ENCODE measurements at regions of chr11 and their contacts with region 1.

Region 1: DNA sequence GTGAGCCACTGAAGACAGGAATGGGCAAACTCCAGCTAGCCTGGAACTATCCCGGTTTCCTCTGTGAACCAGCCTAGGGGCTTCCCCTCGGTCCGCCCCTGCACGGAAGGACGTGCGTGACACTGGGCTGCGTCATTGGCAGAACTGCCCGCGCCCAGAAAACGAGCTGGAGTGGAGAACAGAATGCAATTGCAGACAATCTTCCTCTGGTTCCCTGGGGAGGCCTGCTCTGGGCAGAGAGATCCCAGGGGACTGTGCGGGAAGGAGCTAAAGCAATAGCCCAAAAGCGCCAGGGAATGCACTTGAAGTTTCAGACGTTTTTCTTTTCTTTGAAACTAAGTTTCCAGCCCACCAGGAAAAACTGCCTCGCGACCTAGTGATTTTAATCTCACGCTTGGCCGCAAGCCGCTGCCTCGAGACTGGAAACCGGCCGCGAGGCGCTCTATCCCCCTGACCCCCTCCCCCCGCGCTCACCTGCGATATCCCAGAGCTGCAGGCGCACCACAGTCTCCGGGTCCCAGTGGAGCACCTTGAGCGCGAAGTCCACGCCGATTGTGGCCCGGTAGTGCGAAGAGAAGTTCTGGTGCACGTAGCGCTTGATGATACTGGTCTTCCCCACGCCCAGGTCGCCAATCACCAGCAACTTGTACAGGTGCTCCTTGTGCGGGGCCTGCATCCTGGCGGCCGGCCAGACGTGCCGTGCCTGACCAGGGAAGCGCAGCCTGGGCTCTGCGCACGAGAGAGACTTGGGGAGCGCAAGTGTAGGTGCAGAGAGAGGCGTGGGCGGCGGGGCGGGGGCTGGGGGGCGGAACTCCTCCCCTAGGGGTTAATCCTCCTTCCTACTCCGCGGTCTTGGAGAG is at the start of gene RAB38:
- DNase-seq: peak; percentile 84
- H3K4me3 Mint-ChIP-seq: peak within 1 kb of the TSS; percentile 86
- H3K27ac Mint-ChIP-seq: peak within 1 kb of the TSS; percentile 84
- H3K4me1 Mint-ChIP-seq: peaks cover 43% of the 10 kb centered on the region
- H3K27me3 Mint-ChIP-seq: peaks cover 1% of the 10 kb centered on the region
- total RNA-seq, gene RAB38: 2.0 and 2.2 TPM in 2 replicates

Region 2: GRCh38 chr11:88103337-88104206 is 71.4 kb before region 1 on chr11:
- intact Hi-C with region 1: loop called (anchors 5 kb)
- DNase-seq: peak; percentile 80
- H3K4me3 Mint-ChIP-seq: no peak overlapping the region
- H3K27ac Mint-ChIP-seq: no peak overlapping the region
- H3K4me1 Mint-ChIP-seq: no peaks in the 10 kb centered on the region
- H3K27me3 Mint-ChIP-seq: peaks cover 20% of the 10 kb centered on the region

Region 3: GRCh38 chr11:88194990-88195389 is 20.1 kb after region 1 on chr11:
- intact Hi-C with region 1: no loop called
- DNase-seq: no peak
- H3K4me3 Mint-ChIP-seq: no peak overlapping the region
- H3K27ac Mint-ChIP-seq: no peak overlapping the region
- H3K4me1 Mint-ChIP-seq: no peaks in the 10 kb centered on the region
- H3K27me3 Mint-ChIP-seq: peaks cover 30% of the 10 kb centered on the region

Region 4: DNA sequence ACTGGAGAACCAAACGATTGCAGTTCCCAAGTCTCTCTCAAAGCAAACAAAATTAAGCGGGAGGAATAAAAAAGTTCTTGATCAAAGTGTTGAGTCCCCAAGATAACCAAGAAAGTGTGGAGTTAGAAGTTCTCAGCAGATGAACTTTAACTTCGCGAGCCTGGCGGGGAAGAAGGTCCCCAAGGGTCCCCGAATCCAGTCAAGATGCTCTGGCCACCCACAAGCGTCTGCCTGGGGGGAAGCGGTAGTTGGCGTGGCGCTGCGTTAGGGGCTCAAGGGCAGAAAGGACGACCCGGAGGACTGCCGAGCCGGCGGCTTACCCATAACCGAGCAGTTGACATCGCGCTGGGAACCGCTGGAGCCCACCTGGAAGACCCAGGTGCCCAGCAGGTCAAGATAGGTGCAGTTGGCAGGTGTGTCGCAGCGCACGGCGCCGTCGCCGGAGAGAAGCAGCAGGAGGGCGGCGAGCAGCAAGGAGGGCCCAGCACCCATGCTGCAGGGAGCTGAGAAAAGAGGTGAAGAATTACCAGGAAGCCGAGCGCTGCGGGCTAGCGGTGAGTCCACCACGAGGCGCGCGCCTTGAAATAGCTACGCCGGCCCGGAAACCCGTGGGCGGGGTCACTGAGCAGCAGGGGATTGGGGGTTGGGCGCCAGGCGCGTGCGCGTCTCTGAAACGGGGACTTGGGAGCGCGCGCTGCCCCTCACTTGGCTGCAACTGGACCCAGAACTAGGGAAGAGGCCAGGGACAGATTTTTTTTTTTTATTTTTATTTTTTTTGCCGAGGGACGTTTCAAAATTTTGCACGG is 162.4 kb after region 1 on chr11 and contains the start of gene CTSC:
- intact Hi-C with region 1: loop called (anchors 1 kb)
- DNase-seq: peak; percentile 98
- H3K4me3 Mint-ChIP-seq: peak within 1 kb of the TSS; percentile 83
- H3K27ac Mint-ChIP-seq: peak within 1 kb of the TSS; percentile 99
- H3K4me1 Mint-ChIP-seq: peaks cover 40% of the 10 kb centered on the region
- H3K27me3 Mint-ChIP-seq: no peaks in the 10 kb centered on the region
- total RNA-seq, gene CTSC: 67.1 and 71.8 TPM in 2 replicates

Region 5: DNA sequence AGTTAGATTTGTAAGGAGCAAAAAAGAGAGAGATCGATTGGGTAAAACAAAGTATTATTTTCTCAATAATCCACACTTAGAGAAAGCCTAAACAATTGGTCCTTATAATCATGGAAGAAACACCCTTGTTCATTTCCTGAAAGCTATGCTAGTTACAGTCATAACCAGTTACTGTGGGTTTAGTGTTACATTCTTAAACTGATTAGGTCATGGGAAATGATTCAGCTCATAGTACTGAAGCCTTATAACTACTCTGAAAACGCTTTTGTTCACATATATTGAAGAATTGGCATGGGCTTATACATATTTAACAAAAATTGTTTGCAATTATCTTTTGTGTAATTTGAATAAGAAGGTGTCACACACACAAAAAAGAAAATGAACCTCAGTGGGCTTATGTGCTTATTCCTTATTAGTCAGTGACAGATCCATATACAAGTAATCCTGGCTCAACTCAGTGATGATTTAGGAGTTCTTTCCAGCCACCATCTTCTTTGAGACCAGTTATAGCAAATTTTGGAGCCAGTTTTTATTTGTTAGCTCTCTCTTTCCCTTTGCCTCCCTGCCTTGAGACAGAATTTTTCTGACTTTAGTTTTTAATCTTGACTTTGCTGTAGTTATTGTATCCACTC is 361.1 kb after region 1 on chr11:
- intact Hi-C with region 1: loop called (anchors 1 kb)
- DNase-seq: no peak
- H3K4me3 Mint-ChIP-seq: no peak overlapping the region
- H3K27ac Mint-ChIP-seq: no peak overlapping the region
- H3K4me1 Mint-ChIP-seq: peaks cover 13% of the 10 kb centered on the region
- H3K27me3 Mint-ChIP-seq: peaks cover 4% of the 10 kb centered on the region

Measured in activated CD4-positive, alpha-beta T cell treated with anti-CD3 and anti-CD28 coated beads, Interleukin-2, amount 10 ng/mL, durations not matched to agents 24 days and 14 days (primary cell).